Right cardiac atrium (tissue), 5 donors: ENCODE measurements at regions of chr17 and their contacts with region 1.

Region 1: GRCh38 chr17:4986951-4987766 is at the start of gene CAMTA2:
- DNase-seq: peak; percentile 94 to 98 (median 97)
- ATAC-seq: peak; percentile 96
- H3K4me3 ChIP-seq: peak within 1 kb of the TSS; percentile 81
- H3K27ac ChIP-seq: peak within 1 kb of the TSS; percentile 85
- H3K4me1 ChIP-seq: peaks cover 2% of the 10 kb centered on the region
- H3K27me3 ChIP-seq: no peaks in the 10 kb centered on the region
- total RNA-seq, gene CAMTA2: 35.3 to 44.4 (median 40.3) TPM

Region 2: GRCh38 chr17:4908301-4908700 is 78.9 kb before region 1 on chr17:
- intact Hi-C with region 1: loop called in 2 of 4 experiments (anchors 5 kb)
- DNase-seq: peak in 2 of 3 donors; percentile 62 to 65
- ATAC-seq: peak; percentile 43 to 45
- H3K4me3 ChIP-seq: no peak overlapping the region
- H3K27ac ChIP-seq: peak overlapping the region; percentile 57
- H3K4me1 ChIP-seq: no peaks in the 10 kb centered on the region
- H3K27me3 ChIP-seq: no peaks in the 10 kb centered on the region

Region 3: DNA sequence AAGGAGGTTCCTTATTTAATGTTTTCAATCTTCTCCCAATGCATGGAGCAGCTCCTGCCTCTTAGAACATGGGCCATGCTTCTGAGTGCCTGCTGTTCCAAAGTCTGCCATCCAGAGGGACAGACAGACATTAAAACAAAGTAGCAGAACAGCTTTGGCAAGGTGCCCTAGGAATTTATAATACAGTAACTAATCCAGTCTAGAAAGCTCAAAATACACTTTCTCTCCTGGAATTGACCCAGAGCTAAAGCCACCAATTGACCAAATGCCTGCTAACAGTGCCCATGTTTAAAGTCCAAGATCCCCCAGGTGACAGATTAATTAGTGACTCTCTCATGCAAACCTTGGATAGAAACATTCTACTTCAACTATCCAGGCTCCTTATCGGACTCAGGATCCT is 73.2 kb before region 1 on chr17:
- intact Hi-C with region 1: loop called in 2 of 4 experiments (anchors 5 kb)
- DNase-seq: no peak
- ATAC-seq: no peak
- H3K4me3 ChIP-seq: no peak overlapping the region
- H3K27ac ChIP-seq: no peak overlapping the region
- H3K4me1 ChIP-seq: no peaks in the 10 kb centered on the region
- H3K27me3 ChIP-seq: no peaks in the 10 kb centered on the region

Region 4: GRCh38 chr17:4939796-4940624 is 47.1 kb before region 1 on chr17 and contains the starts of genes RNF167 and SLC25A11:
- intact Hi-C with region 1: loop called in 1 of 4 experiments (anchors 10 kb)
- DNase-seq: peak; percentile 96 to 97 (median 97)
- ATAC-seq: peak; percentile 92 to 94
- H3K4me3 ChIP-seq: peak within 1 kb of the TSS; percentile 84
- H3K27ac ChIP-seq: peak within 1 kb of the TSS; percentile 98
- H3K4me1 ChIP-seq: peaks cover 8% of the 10 kb centered on the region
- H3K27me3 ChIP-seq: no peaks in the 10 kb centered on the region
- total RNA-seq, gene RNF167: 76.6 to 108 (median 87.5) TPM
- total RNA-seq, gene SLC25A11: 162 to 230 (median 202) TPM

Region 5: DNA sequence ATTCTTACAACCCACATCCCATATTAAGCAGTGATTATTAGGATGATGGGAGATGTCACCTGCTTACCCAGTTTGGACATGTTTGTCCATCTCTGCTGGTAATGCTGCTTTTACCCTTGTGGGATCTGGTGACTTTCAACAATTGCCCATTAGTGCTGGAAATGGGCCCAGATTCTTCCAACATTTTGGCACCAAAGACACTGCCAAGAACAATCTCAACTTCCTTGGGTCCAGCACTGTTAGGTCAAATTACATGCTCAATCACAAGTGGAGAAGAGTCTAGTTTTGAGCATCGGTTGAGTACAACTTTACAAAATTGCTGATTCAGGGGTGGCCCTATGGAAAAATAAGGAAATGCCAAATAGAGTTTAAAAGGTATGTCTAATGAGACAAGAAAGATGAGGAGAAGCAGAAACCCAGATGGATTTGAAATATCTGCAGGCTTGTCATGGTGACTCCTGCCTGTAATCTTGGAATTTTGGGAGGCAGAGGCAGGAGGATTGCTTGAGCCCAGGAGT is 78.1 kb after region 1 on chr17:
- intact Hi-C with region 1: loop called in 2 of 4 experiments (anchors 10 kb)
- DNase-seq: no peak
- ATAC-seq: no peak
- H3K4me3 ChIP-seq: no peak overlapping the region
- H3K27ac ChIP-seq: no peak overlapping the region
- H3K4me1 ChIP-seq: no peaks in the 10 kb centered on the region
- H3K27me3 ChIP-seq: no peaks in the 10 kb centered on the region

Region 6: DNA sequence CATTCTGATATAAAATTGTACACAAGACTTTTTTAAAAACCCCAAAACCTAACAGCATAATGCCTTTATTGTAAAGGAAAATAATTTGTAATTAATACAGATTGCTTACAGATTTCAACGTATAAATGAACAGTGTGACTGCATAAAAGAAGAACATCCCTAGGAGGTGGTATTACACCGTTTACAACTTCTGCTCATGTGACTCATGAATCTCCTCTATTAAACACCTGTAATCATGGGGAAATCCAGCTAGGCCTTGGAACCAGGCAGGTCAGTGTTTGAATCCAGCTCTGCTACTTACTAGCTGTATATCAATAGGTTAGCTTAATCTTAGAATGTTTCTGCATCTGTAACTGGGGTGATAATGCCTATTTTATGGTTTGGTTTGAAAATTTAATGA is 310.1 kb after region 1 on chr17:
- intact Hi-C with region 1: no loop called
- DNase-seq: no peak
- ATAC-seq: no peak
- H3K4me3 ChIP-seq: no peak overlapping the region
- H3K27ac ChIP-seq: no peak overlapping the region
- H3K4me1 ChIP-seq: peaks cover 4% of the 10 kb centered on the region
- H3K27me3 ChIP-seq: no peaks in the 10 kb centered on the region